ENCODE measurements at regions of chr5 and their contacts with region 1.

Region 1: DNA sequence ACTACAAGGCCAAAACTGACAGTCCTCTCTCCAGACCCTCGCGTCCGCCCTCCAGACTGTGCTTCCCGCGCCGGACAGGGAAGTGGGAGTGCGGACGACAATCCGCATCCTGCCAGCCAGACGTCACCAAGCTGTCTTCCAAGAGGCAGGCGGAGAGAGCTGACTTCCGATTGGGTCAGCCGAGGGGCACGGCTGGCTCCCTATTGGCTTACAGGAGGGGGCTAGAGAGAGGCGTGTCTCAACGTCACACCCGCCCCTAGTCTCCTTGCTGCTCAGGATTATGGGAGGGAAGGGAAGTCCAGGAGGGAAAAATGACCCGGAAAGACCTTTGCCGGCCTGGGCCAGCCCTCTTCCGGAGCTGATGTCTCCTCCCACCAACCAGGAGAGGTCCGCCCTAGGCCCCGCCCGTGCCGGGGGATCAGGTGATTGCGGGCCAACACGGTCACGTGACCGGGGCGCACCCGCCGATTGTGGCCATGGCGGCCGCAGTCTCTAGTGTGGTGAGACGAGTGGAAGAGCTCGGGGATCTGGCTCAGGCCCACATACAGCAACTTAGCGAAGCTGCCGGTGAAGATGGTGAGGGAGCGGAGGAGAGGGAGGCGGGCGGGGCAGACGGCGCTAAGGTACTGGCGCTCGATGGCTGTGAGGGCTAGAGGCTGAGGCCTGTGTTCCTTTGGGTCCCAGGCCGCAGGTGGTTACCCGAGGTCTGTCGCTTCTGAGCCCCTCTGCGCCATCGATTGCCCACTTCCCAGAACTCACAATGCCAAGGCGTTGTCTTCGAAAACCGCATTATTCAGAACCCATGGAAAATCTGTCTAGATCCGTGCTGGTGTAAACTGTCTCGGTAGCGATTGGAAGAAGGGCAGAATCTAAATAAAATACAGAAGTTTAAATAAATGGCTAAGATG is at the start of gene RIMOC1:
- DNase-seq: peak; percentile 94 to 98 (median 97)
- ATAC-seq: peak; percentile 94
- H3K4me3 ChIP-seq: peak within 1 kb of the TSS; percentile 90
- H3K4me3 Mint-ChIP-seq: peak within 1 kb of the TSS; percentile 84 to 99 (median 98)
- H3K27ac ChIP-seq: peak within 1 kb of the TSS; percentile 85
- H3K27ac Mint-ChIP-seq: peak within 1 kb of the TSS; percentile 97 to 100 (median 99)
- H3K4me1 ChIP-seq: peaks cover 16 to 18% of the 10 kb centered on the region in 2 donors
- H3K4me1 Mint-ChIP-seq: peaks cover 21 to 54% (median 46%) of the 10 kb centered on the region in 7 donors
- H3K27me3 ChIP-seq: no peaks in the 10 kb centered on the region
- H3K27me3 Mint-ChIP-seq: peaks cover 0 to 11% (median 0%) of the 10 kb centered on the region in 5 donors
- total RNA-seq, gene RIMOC1: 13.8 to 40.6 (median 27.5) TPM

Region 2: GRCh38 chr5:40834849-40835787 is 1069.0 kb before region 1 on chr5 and contains the start of gene RPL37:
- CTCF ChIA-PET with region 1: no interaction called
- POLR2A ChIA-PET with region 1: no interaction called
- intact Hi-C with region 1: loop called in 1 of 2 experiments (anchors 10 kb)
- DNase-seq: peak; percentile 73 to 91 (median 88)
- ATAC-seq: peak; percentile 96
- H3K4me3 ChIP-seq: peak within 1 kb of the TSS; percentile 88
- H3K4me3 Mint-ChIP-seq: peak within 1 kb of the TSS; percentile 93 to 99 (median 98)
- H3K27ac ChIP-seq: peak within 1 kb of the TSS; percentile 92
- H3K27ac Mint-ChIP-seq: peak within 1 kb of the TSS; percentile 97 to 100 (median 99)
- H3K4me1 ChIP-seq: peaks cover 11 to 23% of the 10 kb centered on the region in 2 donors
- H3K4me1 Mint-ChIP-seq: peaks cover 21 to 58% (median 45%) of the 10 kb centered on the region in 7 donors
- H3K27me3 ChIP-seq: no peaks in the 10 kb centered on the region
- H3K27me3 Mint-ChIP-seq: no peaks in the 10 kb centered on the region
- total RNA-seq, gene RPL37: 1,642 to 2,808 (median 2,710) TPM

Region 3: DNA sequence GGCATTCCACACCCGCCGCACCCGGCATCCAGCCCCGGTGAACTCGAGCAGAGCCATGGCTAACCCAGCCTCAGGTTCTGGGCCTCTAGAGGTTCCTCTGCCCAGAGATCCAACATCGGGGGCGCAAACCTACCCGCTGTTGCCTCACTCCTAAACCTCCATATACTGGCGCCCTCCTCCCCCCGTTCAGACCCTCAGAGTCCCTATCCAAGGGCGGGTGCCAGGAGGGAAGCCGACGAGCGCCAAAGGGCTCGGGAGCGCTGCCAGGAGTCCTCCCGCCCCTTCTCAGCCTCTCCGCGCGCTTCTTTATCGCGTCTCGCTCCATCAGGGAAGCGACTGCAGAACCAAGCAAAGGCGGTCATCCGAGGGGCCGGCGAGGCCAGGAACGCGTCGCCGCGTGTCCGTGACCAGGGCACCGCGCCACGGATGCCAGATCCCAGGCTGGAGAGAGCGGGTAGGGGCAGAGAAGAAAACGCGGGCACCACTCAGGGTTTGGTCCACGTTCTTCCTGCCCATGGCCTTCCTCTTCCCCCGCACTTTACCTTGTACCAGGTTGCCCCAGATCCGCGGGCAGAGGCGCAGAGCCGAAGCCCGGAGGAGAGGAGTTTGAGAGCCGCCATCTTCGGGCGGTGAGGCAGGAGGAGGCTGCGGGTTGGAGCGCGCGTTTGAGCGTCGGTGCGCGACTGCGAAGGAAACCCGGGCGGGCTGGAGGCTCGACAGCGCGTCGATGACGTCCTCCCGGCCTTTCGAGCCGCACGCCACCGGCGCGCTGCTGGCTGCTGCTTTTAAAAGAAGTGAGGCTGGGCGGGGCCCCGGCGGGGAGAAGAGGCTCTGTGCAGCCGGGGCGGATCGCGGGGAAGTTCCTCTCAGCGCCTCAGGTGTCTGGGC is 34.2 kb before region 1 on chr5 and contains the start of gene OXCT1:
- CTCF ChIA-PET with region 1: interaction called, 5 read pairs
- POLR2A ChIA-PET with region 1: interaction called, 62 read pairs
- intact Hi-C with region 1: loop called (anchors 1 kb)
- DNase-seq: peak; percentile 88 to 96 (median 95)
- ATAC-seq: peak; percentile 97
- H3K4me3 ChIP-seq: peak within 1 kb of the TSS; percentile 91
- H3K4me3 Mint-ChIP-seq: peak within 1 kb of the TSS; percentile 85 to 94 (median 90)
- H3K27ac ChIP-seq: peak within 1 kb of the TSS; percentile 97
- H3K27ac Mint-ChIP-seq: peak within 1 kb of the TSS; percentile 89 to 98 (median 97)
- H3K4me1 ChIP-seq: peaks cover 16% of the 10 kb centered on the region in 2 donors
- H3K4me1 Mint-ChIP-seq: peaks cover 18 to 63% (median 57%) of the 10 kb centered on the region in 7 donors
- H3K27me3 ChIP-seq: no peaks in the 10 kb centered on the region
- H3K27me3 Mint-ChIP-seq: no peaks in the 10 kb centered on the region
- total RNA-seq, gene OXCT1: 18.6 to 53.1 (median 30.0) TPM

Region 4: DNA sequence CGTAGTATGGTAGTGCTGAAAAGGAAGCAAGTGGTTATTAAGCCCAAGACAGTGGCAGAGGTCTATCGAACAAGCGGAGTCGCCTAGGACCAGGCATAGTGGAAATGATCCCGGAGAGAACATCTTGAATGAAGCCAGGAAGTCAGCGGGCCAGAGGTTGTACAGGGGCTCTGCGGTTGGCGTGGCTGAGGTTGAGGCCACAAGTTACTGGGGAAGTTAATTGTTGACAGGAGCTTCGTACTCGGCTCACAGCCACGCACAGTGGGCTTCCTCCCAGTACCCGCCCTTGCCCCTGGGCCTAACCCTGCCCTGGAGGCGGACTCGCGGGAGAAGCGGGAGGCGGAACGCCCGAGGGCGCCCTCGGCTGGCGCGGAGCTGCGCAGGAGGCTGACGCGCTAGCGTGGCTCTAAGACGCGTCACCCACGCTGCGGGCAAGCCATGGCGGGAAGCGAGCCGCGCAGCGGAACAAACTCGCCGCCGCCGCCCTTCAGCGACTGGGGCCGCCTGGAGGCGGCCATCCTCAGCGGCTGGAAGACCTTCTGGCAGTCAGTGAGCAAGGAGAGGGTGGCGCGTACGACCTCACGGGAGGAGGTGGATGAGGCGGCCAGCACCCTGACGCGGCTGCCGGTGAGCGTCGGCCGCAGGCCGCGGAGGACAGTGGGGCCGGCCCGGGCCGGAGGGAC is 20.9 kb after region 1 on chr5 and contains the start of gene FBXO4:
- CTCF ChIA-PET with region 1: interaction called, 5 read pairs
- POLR2A ChIA-PET with region 1: interaction called, 54 read pairs
- intact Hi-C with region 1: loop called (anchors 1 kb)
- DNase-seq: peak; percentile 79 to 92 (median 88)
- ATAC-seq: peak; percentile 97
- H3K4me3 ChIP-seq: peak within 1 kb of the TSS; percentile 85
- H3K4me3 Mint-ChIP-seq: peak within 1 kb of the TSS; percentile 83 to 93 (median 88)
- H3K27ac ChIP-seq: peak within 1 kb of the TSS; percentile 96
- H3K27ac Mint-ChIP-seq: peak within 1 kb of the TSS; percentile 93 to 100 (median 97)
- H3K4me1 ChIP-seq: peaks cover 6 to 14% of the 10 kb centered on the region in 2 donors
- H3K4me1 Mint-ChIP-seq: peaks cover 9 to 43% (median 25%) of the 10 kb centered on the region in 7 donors
- H3K27me3 ChIP-seq: no peaks in the 10 kb centered on the region
- H3K27me3 Mint-ChIP-seq: no peaks in the 10 kb centered on the region
- total RNA-seq, gene FBXO4: 10.9 to 15.0 (median 14.6) TPM

Region 5: DNA sequence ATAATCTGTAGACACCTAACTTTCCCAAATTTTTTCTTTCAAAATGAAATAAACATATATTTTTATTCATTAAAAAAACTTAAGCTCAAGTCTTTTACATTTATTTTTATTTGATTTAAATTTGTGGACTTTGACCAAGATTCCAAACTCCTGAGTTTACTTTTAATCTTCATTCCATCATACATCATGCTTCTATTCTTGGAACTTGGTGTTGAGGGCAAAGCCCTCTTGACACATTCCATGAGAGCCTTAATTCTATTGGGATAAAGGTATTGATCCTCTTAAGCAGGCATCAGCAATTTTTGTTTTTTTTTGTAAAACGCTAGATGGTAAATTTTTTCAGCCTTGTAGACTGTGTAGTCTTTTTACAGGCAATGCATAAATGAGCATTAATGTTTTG is 74.5 kb after region 1 on chr5:
- CTCF ChIA-PET with region 1: no interaction called
- POLR2A ChIA-PET with region 1: no interaction called
- intact Hi-C with region 1: no loop called
- DNase-seq: no peak
- ATAC-seq: no peak
- H3K4me3 ChIP-seq: no peak overlapping the region
- H3K4me3 Mint-ChIP-seq: no peak overlapping the region
- H3K27ac ChIP-seq: no peak overlapping the region
- H3K27ac Mint-ChIP-seq: no peak overlapping the region
- H3K4me1 ChIP-seq: no peaks in the 10 kb centered on the region
- H3K4me1 Mint-ChIP-seq: peaks cover 0 to 2% (median 0%) of the 10 kb centered on the region in 7 donors
- H3K27me3 ChIP-seq: no peaks in the 10 kb centered on the region
- H3K27me3 Mint-ChIP-seq: peaks cover 0 to 8% (median 4%) of the 10 kb centered on the region in 5 donors

Region 6: DNA sequence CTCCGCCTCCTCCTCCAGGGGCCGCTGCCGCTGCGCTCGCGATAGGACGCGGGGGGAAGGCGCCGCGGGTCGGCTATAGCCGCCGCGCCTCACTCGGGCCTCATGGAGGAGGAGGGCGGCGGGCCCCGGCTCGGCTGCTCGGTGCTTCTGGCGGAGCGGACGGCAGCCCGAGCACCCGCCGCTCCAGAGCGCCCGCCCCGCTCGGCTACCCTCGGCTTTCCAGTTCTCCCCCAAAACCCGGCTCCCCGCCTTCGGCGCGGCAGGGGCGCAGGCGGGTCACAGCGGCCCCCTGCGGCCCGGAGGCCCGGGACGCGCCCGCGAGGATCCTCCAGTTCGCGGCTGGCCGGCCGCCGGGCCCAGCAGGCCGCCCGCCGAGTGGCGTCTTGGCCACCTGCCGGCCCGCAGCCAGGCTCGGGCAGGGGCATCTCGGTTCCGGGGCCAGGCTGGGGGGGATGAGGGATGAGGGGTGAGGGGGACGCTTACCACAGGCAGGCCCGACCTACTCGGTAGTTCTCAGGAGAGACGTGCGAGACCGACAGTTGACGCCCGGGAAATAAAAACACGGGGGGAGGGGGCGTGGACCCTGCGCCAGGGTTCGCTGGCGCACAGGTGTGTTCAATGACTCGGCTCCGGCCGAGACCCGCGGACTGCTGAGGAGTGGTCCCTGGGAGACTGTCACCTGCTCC is 1652.9 kb after region 1 on chr5 and contains the start of gene PAIP1:
- CTCF ChIA-PET with region 1: no interaction called
- POLR2A ChIA-PET with region 1: no interaction called
- intact Hi-C with region 1: loop called (anchors 1 to 2 kb)
- DNase-seq: peak; percentile 80 to 89 (median 87)
- ATAC-seq: peak; percentile 89
- H3K4me3 ChIP-seq: peak within 1 kb of the TSS; percentile 79
- H3K4me3 Mint-ChIP-seq: peak within 1 kb of the TSS in 7 of 10 donors; percentile 88 to 97 (median 95)
- H3K27ac ChIP-seq: peak within 1 kb of the TSS; percentile 96
- H3K27ac Mint-ChIP-seq: peak within 1 kb of the TSS; percentile 91 to 99 (median 98)
- H3K4me1 ChIP-seq: peaks cover 17 to 30% of the 10 kb centered on the region in 2 donors
- H3K4me1 Mint-ChIP-seq: peaks cover 6 to 17% (median 7%) of the 10 kb centered on the region in 7 donors
- H3K27me3 ChIP-seq: no peaks in the 10 kb centered on the region
- H3K27me3 Mint-ChIP-seq: peaks cover 0 to 18% (median 5%) of the 10 kb centered on the region in 5 donors
- total RNA-seq, gene PAIP1: 20.7 to 41.7 (median 39.2) TPM

Measured in naive thymus-derived CD4-positive, alpha-beta T cell (primary cell).